CD8-positive, alpha-beta memory T cell (primary cell): ENCODE measurements at regions of chr5 and their contacts with region 1.

Region 1: GRCh38 chr5:107571621-107572536 is 98.9 kb downstream of the EFNA5 start:
- DNase-seq: peak; percentile 69 to 88 (median 77)
- H3K4me3 ChIP-seq: peak overlapping the region; percentile 76
- H3K4me3 Mint-ChIP-seq: peak overlapping the region; percentile 70 to 93 (median 88)
- H3K27ac ChIP-seq: peak overlapping the region; percentile 40
- H3K27ac Mint-ChIP-seq: peak overlapping the region in 7 of 8 donors; percentile 71 to 93 (median 83)
- H3K4me1 ChIP-seq: peaks cover 14% of the 10 kb centered on the region
- H3K4me1 Mint-ChIP-seq: peaks cover 22 to 25% (median 24%) of the 10 kb centered on the region in 3 donors
- H3K27me3 ChIP-seq: no peaks in the 10 kb centered on the region
- H3K27me3 Mint-ChIP-seq: peaks cover 2 to 16% of the 10 kb centered on the region in 2 donors

Region 2: DNA sequence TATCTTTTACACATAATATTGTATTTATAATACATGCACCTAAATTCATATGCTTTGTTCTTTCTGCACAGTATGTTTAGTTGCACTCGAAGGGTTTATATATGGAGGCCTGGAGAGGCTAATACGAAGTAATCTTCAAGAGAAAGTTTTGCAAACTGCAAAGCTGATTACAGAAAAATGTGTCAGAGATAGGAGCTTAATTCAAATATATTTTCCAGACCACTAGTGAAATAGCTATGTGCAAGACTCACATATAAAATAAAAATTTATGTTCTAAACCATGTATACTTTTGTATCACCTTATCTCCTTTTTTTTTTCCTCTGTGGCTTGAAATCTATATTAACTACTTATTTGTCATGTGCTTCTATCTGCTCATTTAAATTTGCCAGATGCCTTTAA is 215.0 kb before region 1 on chr5:
- CTCF ChIA-PET with region 1: no interaction called
- POLR2A ChIA-PET with region 1: no interaction called
- DNase-seq: no peak
- H3K4me3 ChIP-seq: no peak overlapping the region
- H3K4me3 Mint-ChIP-seq: no peak overlapping the region
- H3K27ac ChIP-seq: no peak overlapping the region
- H3K27ac Mint-ChIP-seq: peak overlapping the region in 1 of 8 donors; percentile 69
- H3K4me1 ChIP-seq: no peaks in the 10 kb centered on the region
- H3K4me1 Mint-ChIP-seq: peaks cover 0 to 9% (median 0%) of the 10 kb centered on the region in 3 donors
- H3K27me3 ChIP-seq: no peaks in the 10 kb centered on the region
- H3K27me3 Mint-ChIP-seq: peaks cover 0 to under 1% of the 10 kb centered on the region in 2 donors

Region 3: GRCh38 chr5:107389130-107389774 is 182.6 kb before region 1 on chr5:
- CTCF ChIA-PET with region 1: interaction called, 13 read pairs
- POLR2A ChIA-PET with region 1: no interaction called
- DNase-seq: peak in 1 of 5 donors; percentile 26
- H3K4me3 ChIP-seq: no peak overlapping the region
- H3K4me3 Mint-ChIP-seq: peak overlapping the region in 5 of 7 donors; percentile 2 to 53 (median 36)
- H3K27ac ChIP-seq: no peak overlapping the region
- H3K27ac Mint-ChIP-seq: peak overlapping the region in 4 of 8 donors; percentile 2 to 63 (median 40)
- H3K4me1 ChIP-seq: peaks cover 18% of the 10 kb centered on the region
- H3K4me1 Mint-ChIP-seq: peaks cover 30 to 33% (median 31%) of the 10 kb centered on the region in 3 donors
- H3K27me3 ChIP-seq: no peaks in the 10 kb centered on the region
- H3K27me3 Mint-ChIP-seq: no peaks in the 10 kb centered on the region

Region 4: GRCh38 chr5:107538805-107539445 is 33.0 kb before region 1 on chr5:
- CTCF ChIA-PET with region 1: interaction called, 18 read pairs
- POLR2A ChIA-PET with region 1: no interaction called
- DNase-seq: no peak
- H3K4me3 ChIP-seq: no peak overlapping the region
- H3K4me3 Mint-ChIP-seq: peak overlapping the region in 3 of 7 donors; percentile 10 to 44 (median 13)
- H3K27ac ChIP-seq: no peak overlapping the region
- H3K27ac Mint-ChIP-seq: peak overlapping the region in 1 of 8 donors; percentile 17
- H3K4me1 ChIP-seq: no peaks in the 10 kb centered on the region
- H3K4me1 Mint-ChIP-seq: peaks cover 30 to 40% (median 34%) of the 10 kb centered on the region in 3 donors
- H3K27me3 ChIP-seq: no peaks in the 10 kb centered on the region
- H3K27me3 Mint-ChIP-seq: no peaks in the 10 kb centered on the region